ENCODE measurements at regions of chr6 and their contacts with region 1.

Region 1: DNA sequence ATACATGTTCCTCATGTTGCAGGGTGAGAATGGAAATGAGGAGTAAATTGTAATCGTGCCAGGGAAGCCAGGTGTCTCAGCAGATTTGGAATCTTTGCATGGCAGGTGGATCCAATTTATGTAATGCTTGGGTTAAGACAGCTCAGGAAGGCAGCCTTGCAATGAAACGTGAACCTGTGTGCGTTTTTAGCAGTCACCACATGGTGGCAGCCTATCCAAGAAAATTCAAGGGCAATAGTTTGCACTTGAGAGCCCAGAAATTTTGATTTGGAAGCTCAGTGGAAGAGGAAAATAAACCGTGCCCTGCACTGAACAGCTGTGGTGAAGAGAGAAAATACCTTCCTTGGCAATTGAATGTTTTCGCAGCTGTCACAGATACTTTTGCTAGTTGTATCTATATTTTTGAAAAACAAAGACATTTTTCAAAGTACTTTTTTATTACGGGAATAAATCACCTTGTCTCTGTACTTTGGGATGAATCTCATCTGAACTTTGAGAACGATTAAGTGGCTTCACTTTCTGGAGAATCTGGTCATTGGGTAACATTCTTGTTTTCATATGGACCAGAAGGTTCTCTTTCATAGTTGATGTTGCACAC is 26.5 kb downstream of the MTHFD1L start:
- DNase-seq: peak; percentile 67 to 79
- H3K4me3 ChIP-seq: no peak overlapping the region
- H3K4me3 Mint-ChIP-seq: no peak overlapping the region
- H3K27ac Mint-ChIP-seq: no peak overlapping the region
- H3K4me1 ChIP-seq: no peaks in the 10 kb centered on the region
- H3K4me1 Mint-ChIP-seq: no peaks in the 10 kb centered on the region
- H3K27me3 ChIP-seq: no peaks in the 10 kb centered on the region
- H3K27me3 Mint-ChIP-seq: no peaks in the 10 kb centered on the region
- CTCF ChIP-seq: peak; percentile 79

Region 2: GRCh38 chr6:150511313-150511712 is 380.7 kb before region 1 on chr6:
- CTCF ChIA-PET with region 1: no interaction called
- POLR2A ChIA-PET with region 1: no interaction called
- intact Hi-C with region 1: no loop called
- DNase-seq: no peak
- H3K4me3 ChIP-seq: no peak overlapping the region
- H3K4me3 Mint-ChIP-seq: no peak overlapping the region
- H3K27ac Mint-ChIP-seq: no peak overlapping the region
- H3K4me1 ChIP-seq: peaks cover 20% of the 10 kb centered on the region
- H3K4me1 Mint-ChIP-seq: peaks cover 18% of the 10 kb centered on the region
- H3K27me3 ChIP-seq: no peaks in the 10 kb centered on the region
- H3K27me3 Mint-ChIP-seq: no peaks in the 10 kb centered on the region
- CTCF ChIP-seq: no peak

Region 3: DNA sequence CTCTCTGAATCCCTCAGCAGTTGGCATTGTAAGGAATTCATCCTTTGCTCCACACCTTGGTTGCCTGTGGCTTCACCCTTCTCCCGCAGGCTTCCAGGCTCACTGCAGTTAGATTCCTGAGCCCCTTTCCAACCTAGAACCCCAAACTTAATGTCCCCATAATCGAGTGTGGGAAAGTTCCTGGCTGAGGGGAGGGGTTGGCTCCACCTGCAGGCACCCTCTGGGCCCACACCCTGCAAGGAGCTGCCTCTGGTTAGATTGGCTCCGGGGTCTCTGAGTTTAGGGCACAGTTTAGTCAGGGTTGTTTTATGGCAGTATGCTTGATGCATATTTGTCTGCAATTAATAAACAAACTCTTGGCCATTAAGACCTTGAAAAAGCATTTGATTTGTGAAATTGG is 36.9 kb after region 1 on chr6:
- CTCF ChIA-PET with region 1: interaction called, 18 read pairs
- POLR2A ChIA-PET with region 1: no interaction called
- intact Hi-C with region 1: loop called (anchors 1 kb)
- DNase-seq: no peak
- H3K4me3 ChIP-seq: no peak overlapping the region
- H3K4me3 Mint-ChIP-seq: no peak overlapping the region
- H3K27ac Mint-ChIP-seq: peak overlapping the region; percentile 21
- H3K4me1 ChIP-seq: peaks cover 15% of the 10 kb centered on the region; the same call in 1 of the 2 replicates
- H3K4me1 Mint-ChIP-seq: peaks cover 34% of the 10 kb centered on the region
- H3K27me3 ChIP-seq: no peaks in the 10 kb centered on the region
- H3K27me3 Mint-ChIP-seq: no peaks in the 10 kb centered on the region
- CTCF ChIP-seq: peak; percentile 51 to 60

Region 4: DNA sequence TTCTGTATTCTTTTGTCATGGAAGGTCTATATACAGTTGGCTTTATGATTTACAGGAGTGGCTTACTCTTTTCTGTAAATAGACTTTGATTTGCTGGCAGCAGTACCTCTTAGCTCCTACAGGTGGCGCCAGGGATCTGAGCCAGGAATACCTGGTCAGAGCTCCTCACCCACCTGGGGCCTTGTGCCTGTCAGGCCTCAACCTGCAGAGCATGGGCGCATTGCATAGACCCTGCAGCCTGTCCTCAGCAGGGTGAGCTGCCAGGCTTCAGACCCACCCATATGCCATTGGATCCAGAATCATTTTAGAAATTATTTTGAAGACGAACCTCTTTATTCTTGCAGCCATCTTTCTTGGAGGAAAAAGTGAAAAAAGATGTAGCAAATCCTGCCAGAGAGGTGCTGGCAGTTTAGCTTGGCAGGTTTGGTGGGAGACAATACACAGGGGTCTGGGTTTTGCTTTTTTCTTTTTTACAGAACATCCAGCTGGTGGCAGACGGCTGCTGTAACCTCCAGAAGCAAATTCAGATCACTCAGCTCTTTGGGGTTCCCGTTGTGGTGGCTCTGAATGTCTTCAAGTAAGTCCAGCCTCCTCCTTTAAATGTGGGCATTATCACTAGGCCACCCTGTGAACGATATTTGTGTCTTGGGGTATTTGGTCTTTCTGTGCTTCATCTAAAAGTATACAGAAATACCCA is 122.6 kb after region 1 on chr6:
- CTCF ChIA-PET with region 1: interaction called, 16 read pairs
- POLR2A ChIA-PET with region 1: no interaction called
- intact Hi-C with region 1: loop called (anchors 2 kb)
- DNase-seq: peak; percentile 74 to 75
- H3K4me3 ChIP-seq: no peak overlapping the region
- H3K4me3 Mint-ChIP-seq: no peak overlapping the region
- H3K27ac Mint-ChIP-seq: no peak overlapping the region
- H3K4me1 ChIP-seq: no peaks in the 10 kb centered on the region
- H3K4me1 Mint-ChIP-seq: no peaks in the 10 kb centered on the region
- H3K27me3 ChIP-seq: no peaks in the 10 kb centered on the region
- H3K27me3 Mint-ChIP-seq: no peaks in the 10 kb centered on the region
- CTCF ChIP-seq: peak; percentile 96 to 97

Region 5: DNA sequence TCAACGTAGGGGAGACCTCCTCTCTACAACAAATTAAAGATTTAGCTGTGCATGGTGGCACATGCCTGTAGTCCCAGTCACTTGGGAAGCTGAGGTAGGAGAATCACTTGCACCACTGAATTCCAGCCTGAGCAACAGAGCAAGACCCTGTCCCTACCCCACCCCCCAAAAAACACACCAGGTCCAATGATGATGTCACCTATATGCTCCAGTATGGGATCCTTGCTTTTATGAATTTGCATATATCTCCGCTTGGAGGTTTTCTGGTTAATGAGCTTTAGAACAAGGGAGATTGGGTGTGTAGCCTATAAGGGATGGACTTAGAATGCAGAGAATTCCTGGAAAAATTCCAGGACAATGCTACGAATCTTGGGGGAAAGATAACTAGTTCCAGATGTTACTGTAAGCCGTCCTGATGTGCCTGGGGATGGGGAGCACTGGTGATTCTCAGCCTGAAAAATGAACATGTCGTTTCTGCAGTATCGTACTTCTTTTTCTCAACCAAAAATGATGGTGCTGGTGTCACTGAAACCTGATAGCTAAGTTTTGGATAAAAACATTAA is 438.2 kb after region 1 on chr6:
- CTCF ChIA-PET with region 1: interaction called, 32 read pairs
- POLR2A ChIA-PET with region 1: no interaction called
- intact Hi-C with region 1: loop called (anchors 1 kb)
- DNase-seq: no peak
- H3K4me3 ChIP-seq: no peak overlapping the region
- H3K4me3 Mint-ChIP-seq: no peak overlapping the region
- H3K27ac Mint-ChIP-seq: no peak overlapping the region
- H3K4me1 ChIP-seq: peaks cover under 1% of the 10 kb centered on the region; the same call in 1 of the 2 replicates
- H3K4me1 Mint-ChIP-seq: no peaks in the 10 kb centered on the region
- H3K27me3 ChIP-seq: peaks cover under 1% of the 10 kb centered on the region; the same call in 1 of the 2 replicates
- H3K27me3 Mint-ChIP-seq: no peaks in the 10 kb centered on the region
- CTCF ChIP-seq: no peak

Measured in Caco-2 (cell line).